PC-9 (cell line): ENCODE measurements at regions of chr12 and their contacts with region 1.

Region 1: GRCh38 chr12:49945394-49946080 is 5.0 kb upstream of the AQP2 start:
- DNase-seq: peak; percentile 62 to 78
- H3K4me3 ChIP-seq: no peak overlapping the region
- H3K27ac ChIP-seq: no peak overlapping the region
- H3K4me1 ChIP-seq: peaks cover 29% of the 10 kb centered on the region
- H3K27me3 ChIP-seq: no peaks in the 10 kb centered on the region
- CTCF ChIP-seq: peak; percentile 82

Region 2: DNA sequence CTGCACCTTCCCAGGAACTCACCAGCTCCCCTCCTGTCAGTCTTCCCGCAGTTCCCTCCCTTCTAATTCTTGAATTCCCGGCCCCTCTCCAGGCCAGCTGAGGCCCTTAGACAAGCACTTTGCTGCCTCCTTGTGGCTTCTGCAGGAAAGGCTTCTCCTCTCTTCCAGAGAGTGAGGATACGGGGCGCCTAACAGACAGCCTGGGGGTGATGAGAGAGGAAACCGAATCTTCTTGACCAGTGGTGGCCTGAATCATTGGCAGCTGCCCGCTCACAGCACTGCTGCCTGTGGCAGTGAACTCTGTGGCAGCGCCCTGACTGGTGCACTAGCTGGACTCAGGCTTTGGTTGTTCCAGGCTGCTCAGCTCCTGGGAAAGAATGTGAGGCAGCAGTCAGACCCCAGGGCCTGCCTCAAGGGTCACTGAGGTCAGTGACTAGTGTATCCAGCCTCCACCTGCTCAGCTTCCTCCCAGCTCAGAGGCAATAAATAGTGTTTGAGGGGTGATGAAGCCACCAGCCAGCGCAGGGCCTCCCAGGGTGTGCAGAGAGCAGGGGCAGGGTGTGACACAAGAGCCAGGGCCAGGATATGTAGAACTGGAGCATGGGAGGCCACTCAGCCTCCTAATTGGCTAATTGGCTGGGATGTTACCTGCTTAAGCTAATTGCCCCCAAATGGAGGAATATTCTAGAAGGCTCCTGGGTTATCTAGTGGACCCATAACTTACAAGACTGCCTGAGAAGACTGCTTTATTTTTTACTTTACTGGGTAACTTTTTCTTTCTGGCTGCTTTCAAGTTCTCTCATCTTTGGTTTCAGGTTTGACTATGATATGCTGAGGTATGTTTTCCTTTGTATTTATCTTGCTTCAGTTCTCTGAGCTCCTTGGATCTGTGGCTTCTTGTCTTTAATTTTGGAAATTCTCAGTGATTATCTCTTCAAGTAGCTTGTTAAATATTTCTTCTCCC is 364.7 kb before region 1 on chr12:
- CTCF ChIA-PET with region 1: no interaction called
- POLR2A ChIA-PET with region 1: no interaction called
- intact Hi-C with region 1: no loop called
- DNase-seq: peak; percentile 65 to 66
- H3K4me3 ChIP-seq: no peak overlapping the region
- H3K27ac ChIP-seq: no peak overlapping the region
- H3K4me1 ChIP-seq: no peaks in the 10 kb centered on the region
- H3K27me3 ChIP-seq: no peaks in the 10 kb centered on the region
- CTCF ChIP-seq: peak; percentile 83

Region 3: GRCh38 chr12:49959570-49960465 is 14.3 kb after region 1 on chr12:
- CTCF ChIA-PET with region 1: interaction called, 12 read pairs
- POLR2A ChIA-PET with region 1: no interaction called
- intact Hi-C with region 1: no loop called
- DNase-seq: peak; percentile 83 to 88
- H3K4me3 ChIP-seq: no peak overlapping the region; the same call in 1 of the 2 replicates
- H3K27ac ChIP-seq: no peak overlapping the region
- H3K4me1 ChIP-seq: peaks cover 43% of the 10 kb centered on the region
- H3K27me3 ChIP-seq: no peaks in the 10 kb centered on the region
- CTCF ChIP-seq: no peak

Region 4: DNA sequence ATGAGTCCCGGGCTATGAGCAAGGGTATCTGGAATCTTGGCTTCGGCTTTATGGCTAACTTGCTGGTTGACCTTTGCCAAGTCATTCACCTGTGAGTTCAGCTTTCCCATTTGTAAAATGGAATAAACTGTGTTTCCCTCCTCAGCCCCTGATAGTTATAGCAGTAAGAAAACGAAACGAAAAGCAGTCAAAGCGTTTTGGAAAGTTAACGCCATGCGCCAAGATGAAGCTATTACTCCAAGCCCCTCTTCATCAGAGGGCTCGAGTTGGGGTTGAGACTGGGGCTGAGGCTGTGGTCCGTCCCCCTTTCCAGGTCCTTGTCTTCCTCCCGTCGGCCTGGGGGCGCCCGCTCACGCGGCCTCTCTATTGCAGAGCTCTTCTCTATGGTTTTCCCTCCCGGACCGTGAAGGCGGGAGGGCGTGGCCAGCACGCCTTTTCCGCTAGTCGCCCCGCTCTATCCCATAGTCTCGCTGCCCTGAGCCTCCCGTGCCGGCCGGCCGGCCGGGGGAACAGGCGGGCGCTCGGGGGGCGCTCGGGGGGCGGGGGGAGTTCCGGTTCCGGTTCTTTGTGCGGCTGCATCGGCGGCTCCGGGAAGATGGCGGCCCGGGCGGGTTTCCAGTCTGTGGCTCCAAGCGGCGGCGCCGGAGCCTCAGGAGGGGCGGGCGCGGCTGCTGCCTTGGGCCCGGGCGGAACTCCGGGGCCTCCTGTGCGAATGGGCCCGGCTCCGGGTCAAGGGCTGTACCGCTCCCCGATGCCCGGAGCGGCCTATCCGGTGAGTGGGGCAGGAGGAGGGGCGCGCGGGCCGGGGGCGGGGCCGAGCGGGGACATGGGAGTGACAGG is 139.5 kb after region 1 on chr12 and contains the start of gene SMARCD1:
- CTCF ChIA-PET with region 1: no interaction called
- POLR2A ChIA-PET with region 1: no interaction called
- intact Hi-C with region 1: no loop called
- DNase-seq: peak; percentile 78 to 82
- H3K4me3 ChIP-seq: peak within 1 kb of the TSS; percentile 99
- H3K27ac ChIP-seq: peak within 1 kb of the TSS; percentile 69
- H3K4me1 ChIP-seq: peaks cover 32% of the 10 kb centered on the region
- H3K27me3 ChIP-seq: no peaks in the 10 kb centered on the region
- CTCF ChIP-seq: peak; percentile 51; the same call in 1 of the 2 replicates
- total RNA-seq, gene SMARCD1: 48.8 and 66.7 TPM in 2 replicates

Region 5: DNA sequence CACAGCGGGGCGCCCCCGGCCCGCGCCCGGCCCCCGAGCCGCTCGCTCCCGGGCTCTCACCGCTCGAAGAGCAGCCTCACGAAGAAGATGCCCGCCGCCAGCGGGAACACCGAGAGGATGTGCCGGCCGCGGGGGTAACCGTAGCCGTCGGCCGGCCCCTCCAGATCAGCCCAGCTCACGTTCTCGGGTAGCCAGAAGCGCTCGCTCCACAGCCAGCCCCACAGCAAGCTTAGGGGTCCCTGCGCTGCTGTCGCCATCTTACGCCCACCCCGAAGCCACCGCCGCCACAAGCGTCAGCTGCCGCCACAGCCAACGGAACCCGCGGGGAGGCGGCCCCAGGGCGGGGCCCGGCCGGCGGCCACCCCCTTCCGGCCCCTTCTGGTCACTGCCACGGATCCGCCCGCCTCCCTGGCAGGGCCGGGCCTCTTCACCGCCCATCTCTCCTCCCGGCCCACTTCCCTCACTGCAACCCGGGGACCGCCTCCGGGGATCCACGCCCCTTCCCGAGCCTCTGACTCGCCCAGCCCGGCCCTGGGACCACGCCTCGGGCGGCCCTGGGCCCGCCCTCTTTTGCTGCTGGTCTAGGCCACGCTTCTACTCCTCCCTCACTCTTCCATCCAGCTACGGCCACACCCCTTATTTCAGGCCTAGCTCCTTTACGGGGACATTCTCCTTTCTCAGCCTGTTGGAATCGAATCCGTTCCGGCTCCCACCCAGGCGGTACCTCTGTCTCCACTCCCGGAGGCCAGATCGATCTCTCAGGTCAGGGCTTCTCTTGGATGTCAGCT is 221.7 kb after region 1 on chr12 and contains the start of gene CERS5:
- CTCF ChIA-PET with region 1: interaction called, 11 read pairs
- POLR2A ChIA-PET with region 1: no interaction called
- intact Hi-C with region 1: no loop called
- DNase-seq: peak; percentile 92 to 99
- H3K4me3 ChIP-seq: peak within 1 kb of the TSS; percentile 100
- H3K27ac ChIP-seq: peak within 1 kb of the TSS; percentile 35
- H3K4me1 ChIP-seq: peaks cover 17% of the 10 kb centered on the region; the same call in 1 of the 2 replicates
- H3K27me3 ChIP-seq: no peaks in the 10 kb centered on the region
- CTCF ChIP-seq: peak; percentile 50; the same call in 1 of the 2 replicates
- total RNA-seq, gene CERS5: 33.0 and 41.7 TPM in 2 replicates